ENCODE measurements at regions of chr12 and their contacts with region 1.

Region 1: DNA sequence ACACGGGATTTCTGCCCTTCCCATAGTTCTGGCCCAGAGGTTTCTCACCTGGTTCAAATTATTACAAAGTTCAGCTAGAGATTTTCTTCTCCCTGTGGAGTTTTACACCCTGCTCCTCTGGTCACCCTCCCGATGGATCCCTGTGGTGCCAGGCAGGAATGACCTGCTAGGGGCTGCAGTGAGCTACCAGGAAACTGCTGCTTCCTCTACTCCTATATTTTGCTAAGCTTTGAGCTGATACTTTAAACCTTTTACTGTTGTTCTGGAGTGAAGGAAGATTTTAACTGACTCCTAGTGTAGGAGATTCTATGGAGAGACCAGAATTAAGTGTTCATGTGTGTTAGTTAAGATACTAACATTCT is 30.4 kb upstream of the LRIG3 start:
- DNase-seq: peak; percentile 59
- H3K4me3 Mint-ChIP-seq: peak overlapping the region; percentile 48
- H3K27ac Mint-ChIP-seq: peak overlapping the region; percentile 84
- H3K4me1 Mint-ChIP-seq: peaks cover 67% of the 10 kb centered on the region
- H3K27me3 Mint-ChIP-seq: no peaks in the 10 kb centered on the region
- CTCF ChIP-seq: no peak

Region 2: DNA sequence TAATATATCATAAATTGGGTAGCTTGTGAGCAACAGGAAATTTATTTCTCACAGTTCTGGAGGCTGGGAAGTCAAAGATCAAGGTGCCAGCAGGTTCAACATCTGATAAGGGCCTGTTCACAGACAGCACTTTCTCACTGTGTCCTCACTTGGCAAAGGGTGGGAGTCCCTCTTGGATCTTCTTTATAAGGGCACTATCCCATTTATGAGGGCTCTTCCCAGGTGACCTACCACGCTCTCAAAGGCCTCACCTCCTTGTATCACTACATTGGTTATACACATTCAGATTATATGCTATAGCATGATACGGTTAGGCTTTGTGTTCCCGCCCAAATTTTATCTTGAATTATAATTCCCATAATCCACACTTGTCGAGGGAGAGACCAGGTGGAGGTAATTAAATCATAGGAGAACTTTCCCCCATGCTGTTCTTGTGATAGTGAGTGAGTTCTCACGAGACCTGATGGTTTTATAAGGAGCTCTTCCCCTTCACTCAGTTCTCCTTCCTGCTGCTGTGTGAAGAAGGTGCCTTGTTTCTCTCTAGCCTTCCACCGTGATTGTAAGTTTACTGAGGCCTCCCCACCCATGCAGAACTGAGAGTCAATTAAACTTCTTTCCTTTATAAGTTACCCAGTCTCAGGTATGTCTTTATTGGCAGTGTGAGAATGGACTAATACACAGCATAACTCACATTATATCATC is 11.2 kb before region 1 on chr12:
- CTCF ChIA-PET with region 1: interaction called, 18 read pairs
- intact Hi-C with region 1: no loop called
- DNase-seq: peak; percentile 53
- H3K4me3 Mint-ChIP-seq: peak overlapping the region; percentile 44
- H3K27ac Mint-ChIP-seq: peak overlapping the region; percentile 93
- H3K4me1 Mint-ChIP-seq: peaks cover 64% of the 10 kb centered on the region
- H3K27me3 Mint-ChIP-seq: no peaks in the 10 kb centered on the region
- CTCF ChIP-seq: no peak

Region 3: DNA sequence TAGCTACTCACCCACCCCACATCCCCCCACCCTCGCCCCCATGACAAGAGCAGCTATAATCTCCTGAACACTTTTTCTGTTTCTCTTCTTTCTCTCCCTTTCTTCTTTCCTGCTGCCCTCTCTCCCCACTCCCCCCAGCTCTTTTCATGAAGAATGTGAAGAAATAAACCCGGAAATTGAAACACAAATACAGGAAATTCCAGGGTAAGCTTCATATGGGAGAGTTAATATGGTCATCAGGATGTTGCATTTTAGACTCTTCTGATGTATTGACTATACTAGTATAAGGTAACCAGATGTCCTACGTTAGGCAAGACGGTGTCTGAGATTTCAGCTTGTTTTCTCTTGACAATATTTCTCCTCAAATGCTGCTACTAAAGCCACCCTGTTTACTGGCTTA is 11.2 kb after region 1 on chr12:
- CTCF ChIA-PET with region 1: interaction called, 11 read pairs
- intact Hi-C with region 1: no loop called
- DNase-seq: no peak
- H3K4me3 Mint-ChIP-seq: peak overlapping the region; percentile 5
- H3K27ac Mint-ChIP-seq: peak overlapping the region; percentile 79
- H3K4me1 Mint-ChIP-seq: peaks cover 68% of the 10 kb centered on the region
- H3K27me3 Mint-ChIP-seq: no peaks in the 10 kb centered on the region
- CTCF ChIP-seq: no peak

Region 4: DNA sequence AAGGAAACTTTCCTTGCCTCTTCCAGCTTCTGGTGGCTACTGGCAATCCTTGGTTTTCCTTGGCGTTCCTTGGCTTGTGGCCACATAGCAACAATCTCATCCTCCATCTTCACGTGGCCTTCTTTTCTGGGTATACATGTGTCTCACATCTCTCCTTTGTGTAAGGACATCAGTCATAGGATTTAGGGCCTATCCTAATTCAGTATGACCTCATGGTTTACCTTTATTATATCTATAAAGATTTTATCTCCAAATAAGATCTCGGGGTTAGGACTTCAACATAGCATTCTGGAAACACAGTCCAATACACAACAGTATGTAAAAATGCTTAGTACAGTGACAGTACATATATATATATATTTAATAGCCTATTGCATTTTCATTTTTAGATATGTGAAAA is 28.0 kb after region 1 on chr12:
- CTCF ChIA-PET with region 1: no interaction called
- intact Hi-C with region 1: no loop called
- DNase-seq: no peak
- H3K4me3 Mint-ChIP-seq: no peak overlapping the region
- H3K27ac Mint-ChIP-seq: no peak overlapping the region
- H3K4me1 Mint-ChIP-seq: peaks cover 8% of the 10 kb centered on the region
- H3K27me3 Mint-ChIP-seq: no peaks in the 10 kb centered on the region
- CTCF ChIP-seq: no peak

Region 5: DNA sequence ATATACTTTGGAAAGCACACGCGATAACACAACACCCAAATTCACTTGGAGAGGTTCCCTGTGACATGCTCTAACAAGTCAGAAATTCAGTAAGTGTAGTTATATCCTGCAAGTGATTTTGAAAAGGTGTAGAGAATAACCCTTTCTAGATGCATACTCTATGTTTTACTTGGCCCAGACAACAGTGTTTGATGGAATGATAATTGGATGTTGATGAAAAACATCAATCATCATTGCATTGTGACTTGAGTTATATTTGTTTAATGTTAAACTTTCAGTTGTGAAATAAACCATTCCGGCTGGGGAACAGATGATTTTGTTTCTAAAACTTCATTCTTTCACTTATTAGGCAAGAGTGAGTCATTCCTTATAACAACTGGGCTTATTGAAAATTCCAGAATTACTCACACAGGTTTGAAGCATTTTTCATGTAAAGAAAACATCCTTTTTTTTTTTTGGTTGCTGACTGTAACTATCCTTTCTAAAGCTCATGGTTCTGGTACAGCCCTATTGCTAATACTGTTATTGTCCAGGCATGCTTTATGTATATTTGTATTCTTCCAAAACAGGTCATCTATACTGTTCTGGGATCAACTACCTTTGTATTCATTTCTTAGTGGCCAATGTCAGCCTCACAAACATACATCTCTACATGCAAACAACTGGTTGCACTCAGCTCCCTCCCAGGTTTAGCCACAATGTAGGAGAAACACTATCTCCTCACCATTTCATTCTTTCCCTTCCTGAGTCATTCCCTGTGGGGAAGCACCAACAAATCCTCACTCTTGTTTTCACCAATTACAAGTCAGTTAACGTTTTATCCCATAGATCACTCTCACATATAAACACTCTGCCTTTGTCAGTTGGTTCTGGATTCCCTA is 90.8 kb after region 1 on chr12:
- CTCF ChIA-PET with region 1: interaction called, 14 read pairs
- intact Hi-C with region 1: loop called (anchors 2 kb)
- DNase-seq: peak; percentile 51
- H3K4me3 Mint-ChIP-seq: peak overlapping the region; percentile 28
- H3K27ac Mint-ChIP-seq: peak overlapping the region; percentile 94
- H3K4me1 Mint-ChIP-seq: peaks cover 65% of the 10 kb centered on the region
- H3K27me3 Mint-ChIP-seq: no peaks in the 10 kb centered on the region
- CTCF ChIP-seq: no peak

Measured in Calu3 (cell line).